PC-9 (cell line): ENCODE measurements at regions of chr2 and their contacts with region 1.

Region 1: GRCh38 chr2:147845411-147845971 is 662 bp downstream of the ACVR2A start:
- DNase-seq: peak in 1 of 2 experiments; percentile 6
- H3K4me3 ChIP-seq: peak overlapping the region; percentile 61
- H3K27ac ChIP-seq: 0 out of 2 replicates have a peak overlapping the region, but pooled peaks have one; percentile 0
- H3K4me1 ChIP-seq: peaks cover 37% of the 10 kb centered on the region
- H3K27me3 ChIP-seq: no peaks in the 10 kb centered on the region
- CTCF ChIP-seq: no peak

Region 2: DNA sequence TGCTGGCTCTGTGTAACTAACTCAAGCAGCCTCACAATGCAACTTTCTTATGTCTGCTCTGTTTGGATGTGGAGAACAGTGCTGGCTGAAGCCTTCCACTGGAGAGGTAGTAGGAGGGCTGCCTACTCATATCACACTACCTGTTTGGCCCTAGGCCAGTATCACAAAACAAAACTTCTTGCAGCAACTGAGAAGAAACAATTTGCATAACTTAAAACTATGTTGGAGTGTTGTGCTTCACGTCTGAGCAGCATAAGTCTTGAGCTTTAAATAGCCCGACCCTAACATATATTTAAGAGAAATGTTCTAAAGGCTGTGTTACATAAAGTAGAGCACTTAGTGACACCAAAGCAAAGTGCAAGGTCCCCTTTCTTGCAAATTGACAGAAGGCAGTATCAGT is 205.6 kb before region 1 on chr2:
- CTCF ChIA-PET with region 1: interaction called, 22 read pairs
- POLR2A ChIA-PET with region 1: interaction called, 7 read pairs
- intact Hi-C with region 1: no loop called
- DNase-seq: no peak
- H3K4me3 ChIP-seq: no peak overlapping the region
- H3K27ac ChIP-seq: no peak overlapping the region
- H3K4me1 ChIP-seq: peaks cover 13% of the 10 kb centered on the region
- H3K27me3 ChIP-seq: no peaks in the 10 kb centered on the region
- CTCF ChIP-seq: no peak

Region 3: GRCh38 chr2:147863835-147864234 is 18.3 kb after region 1 on chr2:
- CTCF ChIA-PET with region 1: no interaction called
- POLR2A ChIA-PET with region 1: interaction called, 10 read pairs
- intact Hi-C with region 1: no loop called
- DNase-seq: no peak
- H3K4me3 ChIP-seq: no peak overlapping the region
- H3K27ac ChIP-seq: no peak overlapping the region
- H3K4me1 ChIP-seq: no peaks in the 10 kb centered on the region
- H3K27me3 ChIP-seq: no peaks in the 10 kb centered on the region
- CTCF ChIP-seq: no peak